K562 (cell line): ENCODE measurements at regions of chr15 and their contacts with region 1.

Region 1: GRCh38 chr15:38440353-38441129 is 13.4 kb upstream of the FAM98B start:
- DNase-seq: peak; percentile 50 to 81 (median 70)
- ATAC-seq: peak; percentile 83
- H3K4me3 ChIP-seq: no peak overlapping the region
- H3K27ac ChIP-seq: no peak overlapping the region
- H3K4me1 ChIP-seq: peaks cover 4 to 12% of the 10 kb centered on the region in 2 experiments; a peak in 3 of 5 replicates
- H3K27me3 ChIP-seq: no peaks in the 10 kb centered on the region
- CTCF ChIP-seq: peak; percentile 78 to 93 (median 90)
- EP300 ChIP-seq: no peak
- POLR2A ChIP-seq: no peak
- RAD21 ChIP-seq: peak; percentile 65 to 86

Region 2: DNA sequence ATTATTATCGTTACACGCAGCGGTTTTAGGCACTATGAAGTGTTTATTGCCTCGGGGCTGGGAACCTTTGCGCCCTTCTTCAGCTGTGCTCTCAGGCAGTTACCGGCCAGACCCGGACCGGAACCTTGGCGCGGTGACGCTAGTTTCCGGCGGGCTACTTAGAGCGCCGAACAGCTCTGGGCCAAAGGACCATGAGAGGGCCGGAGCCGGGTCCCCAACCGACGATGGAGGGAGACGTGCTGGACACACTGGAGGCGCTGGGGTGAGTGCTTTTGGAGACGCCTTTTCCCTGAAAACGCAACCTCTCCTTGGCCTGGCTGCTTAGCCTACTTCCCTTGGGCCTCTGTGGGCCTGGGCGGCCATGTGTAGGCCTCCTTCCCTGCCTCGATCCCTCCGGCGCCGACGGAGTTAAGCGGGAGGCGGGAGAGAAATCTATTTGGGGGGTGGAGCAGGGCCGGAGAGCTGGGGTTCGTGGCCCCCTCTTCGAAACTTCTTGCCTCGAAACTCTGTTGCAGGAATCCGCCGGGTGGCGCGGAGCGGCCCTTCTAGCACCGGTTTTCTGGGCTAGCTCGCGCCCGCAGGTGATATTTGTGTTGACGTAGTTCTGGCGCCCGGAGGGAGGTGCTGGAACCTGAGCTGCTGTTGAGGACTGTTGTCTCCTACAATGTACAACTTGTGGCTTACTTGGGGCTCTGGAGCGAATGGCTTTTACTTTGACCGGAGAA is 13.6 kb after region 1 on chr15 and contains the start of gene FAM98B:
- CTCF ChIA-PET with region 1: no interaction called
- POLR2A ChIA-PET with region 1: interaction called, 20 read pairs
- in situ Hi-C with region 1: no loop called
- intact Hi-C with region 1: no loop called
- DNase-seq: peak; percentile 78 to 93 (median 82)
- ATAC-seq: peak; percentile 94
- H3K4me3 ChIP-seq: peak within 1 kb of the TSS; percentile 86
- H3K27ac ChIP-seq: peak within 1 kb of the TSS; percentile 90
- H3K4me1 ChIP-seq: no peaks in the 10 kb centered on the region
- H3K27me3 ChIP-seq: no peaks in the 10 kb centered on the region
- CTCF ChIP-seq: no peak; a peak in 2 of 6 replicates
- EP300 ChIP-seq: peak; percentile 36
- POLR2A ChIP-seq: peak; percentile 96
- RAD21 ChIP-seq: 0 out of 4 replicates have a peak, but pooled peaks of 1 of the 2 experiments have one; percentile 3
- polyA plus RNA-seq, gene FAM98B: 3.1 to 3.7 TPM

Region 3: GRCh38 chr15:38508647-38509046 is 68.1 kb after region 1 on chr15:
- CTCF ChIA-PET with region 1: no interaction called
- POLR2A ChIA-PET with region 1: no interaction called
- in situ Hi-C with region 1: no loop called
- intact Hi-C with region 1: loop called (anchors 5 kb)
- DNase-seq: peak in 2 of 4 experiments; percentile 22 to 62
- ATAC-seq: peak; percentile 50
- H3K4me3 ChIP-seq: no peak overlapping the region
- H3K27ac ChIP-seq: no peak overlapping the region
- H3K4me1 ChIP-seq: peaks cover 0 to 7% of the 10 kb centered on the region in 2 experiments; a peak in 2 of 5 replicates
- H3K27me3 ChIP-seq: no peaks in the 10 kb centered on the region
- CTCF ChIP-seq: no peak
- EP300 ChIP-seq: no peak
- POLR2A ChIP-seq: no peak
- RAD21 ChIP-seq: 0 out of 4 replicates have a peak, but pooled peaks of 1 of the 2 experiments have one; percentile 2

Region 4: DNA sequence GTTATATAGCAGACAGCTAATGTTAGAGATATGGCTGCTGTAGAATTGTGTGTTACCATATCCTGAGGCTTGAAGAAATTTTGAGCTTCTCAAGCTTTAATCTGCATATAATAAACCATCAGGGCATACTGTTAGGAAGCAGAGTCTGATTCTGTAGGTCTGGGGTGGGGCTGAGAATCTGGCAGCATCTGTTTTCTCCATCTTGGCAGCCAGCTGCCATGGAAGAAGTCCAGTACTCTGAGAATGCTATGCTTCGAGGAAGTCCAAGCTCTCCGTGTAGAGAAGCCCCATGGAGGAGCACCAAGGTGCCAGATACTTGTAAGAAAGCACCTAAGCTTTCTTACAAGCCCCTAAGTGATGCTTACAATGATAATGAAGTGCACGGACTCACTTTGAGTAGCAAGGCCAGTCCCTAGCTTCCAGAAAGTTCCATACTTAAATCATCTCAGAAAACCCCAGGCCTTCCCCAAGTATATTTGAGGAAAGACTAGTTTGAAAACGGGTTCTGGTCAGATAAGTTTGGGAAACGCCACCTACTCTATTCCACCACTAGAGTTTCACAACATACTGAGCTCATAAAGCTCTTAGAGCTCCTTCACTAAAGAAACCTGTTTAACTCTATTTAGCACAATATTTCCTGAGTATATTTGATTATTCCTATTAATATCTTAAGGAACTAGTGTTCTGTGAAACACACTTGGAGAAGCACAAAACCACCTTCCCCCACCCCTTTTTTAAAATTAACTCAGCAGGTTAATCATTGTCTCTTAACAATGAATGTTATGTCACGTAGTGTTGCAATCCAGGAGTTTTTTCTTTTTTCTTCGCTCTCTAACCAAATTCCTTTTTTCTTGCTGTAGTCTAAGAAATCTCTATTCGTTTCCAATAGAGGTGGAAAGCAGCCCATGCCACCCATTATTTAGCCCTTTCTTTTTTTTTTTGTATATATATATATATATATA is 184.0 kb after region 1 on chr15:
- CTCF ChIA-PET with region 1: no interaction called
- POLR2A ChIA-PET with region 1: interaction called, 3 read pairs
- in situ Hi-C with region 1: no loop called
- intact Hi-C with region 1: loop called (anchors 1 kb)
- DNase-seq: no peak
- ATAC-seq: no peak
- H3K4me3 ChIP-seq: no peak overlapping the region
- H3K27ac ChIP-seq: no peak overlapping the region
- H3K4me1 ChIP-seq: peaks cover 0 to 2% of the 10 kb centered on the region in 2 experiments; a peak in 2 of 5 replicates
- H3K27me3 ChIP-seq: peaks cover 0 to 4% of the 10 kb centered on the region in 2 experiments; a peak in 3 of 5 replicates
- CTCF ChIP-seq: no peak
- EP300 ChIP-seq: no peak
- POLR2A ChIP-seq: no peak
- RAD21 ChIP-seq: no peak